ENCODE measurements at regions of chr1 and their contacts with region 1.

Region 1: DNA sequence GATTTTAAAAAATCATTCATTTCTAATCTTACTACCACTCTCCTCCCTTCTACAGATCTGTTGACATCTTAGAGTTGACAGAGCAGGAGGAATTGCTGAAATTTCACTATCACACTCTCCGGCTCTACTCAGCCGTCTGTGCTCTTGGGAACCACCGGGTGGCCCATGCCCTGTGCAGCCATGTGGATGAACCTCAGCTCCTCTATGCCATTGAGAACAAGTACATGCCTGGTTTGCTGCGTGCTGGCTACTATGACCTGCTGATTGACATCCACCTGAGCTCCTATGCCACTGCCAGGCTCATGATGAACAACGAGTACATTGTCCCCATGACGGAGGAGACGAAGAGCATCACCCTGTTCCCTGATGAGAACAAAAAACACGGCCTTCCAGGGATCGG is 276.7 kb downstream of the ZP4 start:
- DNase-seq: no peak
- ATAC-seq: no peak
- H3K4me3 ChIP-seq: no peak overlapping the region
- H3K27ac ChIP-seq: no peak overlapping the region
- H3K4me1 ChIP-seq: no peaks in the 10 kb centered on the region
- H3K27me3 ChIP-seq: no peaks in the 10 kb centered on the region
- CTCF ChIP-seq: no peak
- POLR2A ChIP-seq: no peak
- RAD21 ChIP-seq: no peak

Region 2: GRCh38 chr1:237467320-237467719 is 146.7 kb before region 1 on chr1:
- CTCF ChIA-PET with region 1: no interaction called
- POLR2A ChIA-PET with region 1: no interaction called
- RAD21 ChIA-PET with region 1: no interaction called
- intact Hi-C with region 1: no loop called
- DNase-seq: no peak
- ATAC-seq: no peak
- H3K4me3 ChIP-seq: no peak overlapping the region
- H3K27ac ChIP-seq: no peak overlapping the region
- H3K4me1 ChIP-seq: no peaks in the 10 kb centered on the region
- H3K27me3 ChIP-seq: no peaks in the 10 kb centered on the region
- CTCF ChIP-seq: no peak
- POLR2A ChIP-seq: no peak
- RAD21 ChIP-seq: no peak

Region 3: DNA sequence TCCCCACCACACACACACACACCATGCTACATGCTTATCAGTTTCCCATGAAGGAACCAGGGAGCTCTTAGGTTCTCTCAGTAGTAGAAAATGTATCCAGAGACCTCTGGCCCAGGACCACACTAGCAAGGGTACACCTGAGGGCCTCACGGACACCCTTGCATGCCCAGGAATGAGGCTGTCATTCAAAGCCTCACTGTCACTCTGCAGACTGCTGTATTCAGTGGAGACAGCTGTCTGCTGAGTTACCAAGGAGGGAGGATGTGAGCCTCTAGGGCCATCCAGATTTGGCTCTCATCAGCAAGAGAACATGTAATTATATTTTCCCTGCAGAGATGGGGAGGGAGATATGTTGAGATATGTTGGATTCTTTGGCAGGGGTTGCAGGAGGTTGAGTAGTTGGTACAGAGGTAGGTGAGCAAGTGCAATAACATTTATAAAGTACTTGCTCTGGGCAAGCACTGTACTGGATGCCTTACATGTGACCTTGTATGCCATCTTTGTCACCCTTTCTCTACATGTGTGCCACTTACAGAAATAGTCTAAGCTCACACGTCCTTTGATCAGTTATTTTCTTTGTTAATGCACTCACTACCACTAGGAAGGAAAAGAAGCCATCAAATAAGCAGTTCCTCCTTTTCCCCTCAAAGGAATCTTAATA is 26.2 kb after region 1 on chr1:
- CTCF ChIA-PET with region 1: no interaction called
- POLR2A ChIA-PET with region 1: no interaction called
- RAD21 ChIA-PET with region 1: no interaction called
- intact Hi-C with region 1: loop called (anchors 1 kb)
- DNase-seq: no peak
- ATAC-seq: no peak
- H3K4me3 ChIP-seq: no peak overlapping the region
- H3K27ac ChIP-seq: no peak overlapping the region
- H3K4me1 ChIP-seq: no peaks in the 10 kb centered on the region
- H3K27me3 ChIP-seq: no peaks in the 10 kb centered on the region
- CTCF ChIP-seq: no peak
- POLR2A ChIP-seq: no peak
- RAD21 ChIP-seq: no peak

Measured in HCT116 (cell line).